Left cardiac atrium (tissue), 4 donors: ENCODE measurements at regions of chr12 and their contacts with region 1.

Region 1: GRCh38 chr12:56104109-56104814 is at the start of gene PA2G4:
- DNase-seq: peak; percentile 99
- ATAC-seq: peak; percentile 98 to 99
- total RNA-seq, gene PA2G4: 60.4 to 83.9 TPM

Region 2: GRCh38 chr12:56041552-56042429 is 62.5 kb before region 1 on chr12 and contains the start of gene RPS26:
- intact Hi-C with region 1: loop called in 1 of 2 experiments (anchors 10 kb)
- DNase-seq: peak; percentile 98
- ATAC-seq: peak; percentile 97 to 98
- total RNA-seq, gene RPS26: 28.5 to 47.1 TPM